Activated naive CD8-positive, alpha-beta T cell treated with anti-CD3 and anti-CD28 coated beads, Interleukin-2, amount 10 ng/mL, durations not matched to agents 7 days and 5 days (primary cell): ENCODE measurements at regions of chr15 and their contacts with region 1.

Region 1: GRCh38 chr15:50880651-50881114 is 27.8 kb upstream of the AP4E1 start:
- DNase-seq: no peak
- ATAC-seq: peak; percentile 39
- H3K4me3 Mint-ChIP-seq: peak overlapping the region; percentile 50
- H3K27ac Mint-ChIP-seq: peak overlapping the region; percentile 97
- H3K4me1 Mint-ChIP-seq: peaks cover 75% of the 10 kb centered on the region
- H3K27me3 Mint-ChIP-seq: no peaks in the 10 kb centered on the region

Region 2: GRCh38 chr15:50740955-50741354 is 139.7 kb before region 1 on chr15:
- POLR2A ChIA-PET with region 1: no interaction called
- DNase-seq: no peak
- ATAC-seq: no peak
- H3K4me3 Mint-ChIP-seq: no peak overlapping the region
- H3K27ac Mint-ChIP-seq: no peak overlapping the region
- H3K4me1 Mint-ChIP-seq: no peaks in the 10 kb centered on the region
- H3K27me3 Mint-ChIP-seq: no peaks in the 10 kb centered on the region

Region 3: DNA sequence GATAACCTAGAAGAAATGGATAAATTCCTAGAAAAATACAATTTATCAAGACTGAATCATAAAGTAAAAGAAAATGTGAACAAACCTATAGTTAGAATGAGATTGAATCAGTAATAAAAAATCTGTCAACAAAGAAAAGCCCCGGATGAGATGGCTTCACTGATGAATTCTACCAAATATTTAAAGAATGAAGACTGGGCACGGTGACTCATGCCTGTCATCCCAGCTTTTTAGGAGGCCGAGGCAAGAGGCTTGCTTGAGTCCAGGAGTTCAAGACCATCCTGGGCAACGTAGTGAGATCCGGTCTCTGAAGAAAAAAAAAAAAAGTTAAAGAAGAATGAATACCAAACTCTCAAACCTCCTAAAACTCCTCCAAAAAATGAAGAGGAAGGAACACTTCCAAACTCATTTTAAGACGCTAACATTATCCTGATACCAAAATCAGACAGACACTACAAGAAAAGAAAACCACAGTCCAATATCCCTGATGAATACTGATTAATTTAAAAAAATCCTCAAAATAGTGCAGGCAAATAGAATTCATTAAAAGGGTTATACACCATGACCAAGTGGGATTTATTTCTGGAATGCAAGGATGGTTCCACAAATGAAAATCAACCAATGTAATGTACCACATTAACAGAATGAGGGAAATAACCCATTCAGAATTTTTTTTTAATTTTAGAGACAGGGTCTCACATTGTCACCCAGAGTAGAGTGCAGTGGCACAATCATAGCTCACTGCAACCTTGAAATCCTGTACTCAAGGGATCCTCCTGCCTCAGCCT is 10.3 kb after region 1 on chr15:
- POLR2A ChIA-PET with region 1: no interaction called
- DNase-seq: no peak
- ATAC-seq: no peak
- H3K4me3 Mint-ChIP-seq: no peak overlapping the region
- H3K27ac Mint-ChIP-seq: no peak overlapping the region
- H3K4me1 Mint-ChIP-seq: peaks cover 4% of the 10 kb centered on the region
- H3K27me3 Mint-ChIP-seq: no peaks in the 10 kb centered on the region

Region 4: GRCh38 chr15:50908210-50909009 is 27.7 kb after region 1 on chr15 and contains the start of gene AP4E1:
- POLR2A ChIA-PET with region 1: interaction called, 71 read pairs
- DNase-seq: peak; percentile 98
- ATAC-seq: peak; percentile 52
- H3K4me3 Mint-ChIP-seq: peak within 1 kb of the TSS; percentile 99
- H3K27ac Mint-ChIP-seq: peak within 1 kb of the TSS; percentile 98
- H3K4me1 Mint-ChIP-seq: peaks cover 20% of the 10 kb centered on the region
- H3K27me3 Mint-ChIP-seq: no peaks in the 10 kb centered on the region
- total RNA-seq, gene AP4E1: 16.5 to 18.8 TPM